Activated naive CD4-positive, alpha-beta T cell treated with anti-CD3 and anti-CD28 coated beads, Interleukin-2, amount 10 ng/mL, durations not matched to agents 7 days and 5 days (primary cell): ENCODE measurements at regions of chr22 and their contacts with region 1.

Region 1: DNA sequence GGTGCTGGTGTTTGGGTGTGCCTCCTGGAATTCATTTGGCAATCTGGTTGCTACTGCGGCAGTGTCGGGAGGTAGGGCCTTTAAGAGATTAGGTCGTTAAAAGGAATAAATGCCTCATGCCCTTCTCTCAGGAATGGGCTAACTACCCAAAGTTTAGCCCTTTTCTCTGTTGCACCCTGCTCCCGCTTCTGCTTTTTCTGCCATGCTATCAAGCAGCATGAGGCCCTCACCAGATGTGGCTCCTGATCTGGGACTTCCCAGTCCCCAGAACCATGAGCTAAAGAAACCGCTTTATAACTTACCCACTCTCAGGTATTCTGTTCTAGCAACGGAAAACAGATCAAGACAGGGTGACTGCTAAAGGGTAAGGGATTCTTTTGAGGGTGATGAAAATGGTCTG is 6.3 kb downstream of the EIF3D start:
- DNase-seq: no peak
- H3K4me3 Mint-ChIP-seq: no peak overlapping the region
- H3K27ac Mint-ChIP-seq: peak overlapping the region; percentile 68
- H3K4me1 Mint-ChIP-seq: peaks cover 10% of the 10 kb centered on the region
- H3K27me3 Mint-ChIP-seq: no peaks in the 10 kb centered on the region

Region 2: GRCh38 chr22:36510966-36511881 is 11.4 kb before region 1 on chr22:
- CTCF ChIA-PET with region 1: interaction called, 14 read pairs
- DNase-seq: peak; percentile 54
- H3K4me3 Mint-ChIP-seq: no peak overlapping the region
- H3K27ac Mint-ChIP-seq: peak overlapping the region; percentile 3
- H3K4me1 Mint-ChIP-seq: peaks cover 15% of the 10 kb centered on the region
- H3K27me3 Mint-ChIP-seq: no peaks in the 10 kb centered on the region